Posterior vena cava (tissue), 2 donors: ENCODE measurements at regions of chr4 and their contacts with region 1.

Region 1: GRCh38 chr4:146890301-146890700 is 55.4 kb downstream of the TTC29 start:
- DNase-seq: no peak

Region 2: GRCh38 chr4:145396581-145396980 is 1493.7 kb before region 1 on chr4:
- intact Hi-C with region 1: loop called in 1 of 2 experiments (anchors 5 kb)
- DNase-seq: no peak

Region 3: GRCh38 chr4:146699910-146700309 is 190.4 kb before region 1 on chr4:
- intact Hi-C with region 1: no loop called
- DNase-seq: peak; percentile 62

Region 4: DNA sequence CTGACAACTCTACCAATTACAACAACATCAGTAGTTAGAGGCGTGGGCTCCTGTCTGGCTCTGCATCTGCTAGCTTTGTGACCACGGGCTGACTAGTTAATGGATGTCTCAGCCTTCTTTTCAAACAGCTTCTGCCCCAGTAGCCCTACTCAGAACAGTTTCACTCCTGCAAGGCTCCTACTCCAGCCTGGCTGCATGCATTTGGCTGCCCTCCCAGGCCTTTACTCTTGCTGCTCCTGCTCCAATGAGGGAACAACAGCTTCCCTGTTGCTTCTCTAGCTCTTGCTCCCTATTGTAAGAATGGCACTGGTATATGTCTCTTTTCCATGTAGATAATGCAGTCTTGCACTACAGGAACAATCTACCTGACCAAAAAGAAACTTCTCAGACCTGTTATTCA is 37.9 kb before region 1 on chr4:
- intact Hi-C with region 1: no loop called
- DNase-seq: no peak